HepG2 (cell line): ENCODE measurements at regions of chr6 and their contacts with region 1.

Region 1: DNA sequence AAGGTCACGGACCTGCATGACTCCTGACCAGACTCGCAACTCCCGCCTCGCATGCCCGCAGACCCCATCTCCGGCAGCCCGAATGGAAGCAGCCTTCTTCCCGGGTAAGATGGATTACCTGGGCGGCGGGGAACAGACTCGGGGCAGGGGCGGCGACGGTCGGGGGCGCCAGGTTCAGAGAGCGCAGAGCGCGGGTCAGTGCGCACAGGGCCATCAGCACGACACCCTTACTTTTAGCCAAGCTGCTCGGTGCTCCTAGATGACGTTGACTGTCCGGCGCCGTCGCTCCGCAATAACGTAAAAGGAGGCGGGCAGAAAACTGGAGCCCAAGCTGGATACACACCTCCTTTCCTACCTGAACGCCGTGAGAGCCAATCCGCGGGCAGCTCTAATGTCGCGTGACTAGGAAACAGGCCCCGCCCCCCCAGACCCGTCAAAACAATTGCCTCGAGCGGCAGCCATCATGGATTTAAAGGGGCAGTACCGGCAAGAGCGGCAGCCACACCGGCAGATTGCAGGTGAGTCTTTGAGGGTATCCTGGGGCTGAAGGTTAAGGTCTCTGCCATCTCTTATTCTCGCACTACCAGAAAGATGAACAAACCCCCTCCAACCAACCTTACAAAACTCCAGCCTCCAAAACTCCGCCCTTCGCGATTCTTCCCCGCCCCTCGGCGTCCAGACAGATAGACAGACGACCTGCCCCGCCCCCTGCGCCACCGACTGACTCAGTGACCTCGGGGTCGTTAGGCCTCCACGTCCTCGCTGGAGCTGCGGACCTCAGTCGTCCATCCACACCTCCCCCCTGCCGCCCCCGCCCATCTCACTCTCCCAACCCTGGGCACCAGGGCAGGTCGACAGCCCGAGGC is at the starts of genes KLC4 and MRPL2:
- DNase-seq: peak; percentile 99
- ATAC-seq: peak; percentile 82
- H3K4me3 ChIP-seq: peak within 1 kb of the TSS; percentile 74 to 99 (median 93)
- H3K27ac ChIP-seq: peak within 1 kb of the TSS; percentile 91
- H3K4me1 ChIP-seq: peaks cover 37% of the 10 kb centered on the region
- H3K27me3 ChIP-seq: no peaks in the 10 kb centered on the region; a peak in 1 of 5 replicates
- CTCF ChIP-seq: peak; percentile 11; the same call in 1 of the 2 replicates
- EP300 ChIP-seq: peak in 1 of 2 experiments; percentile 18; a peak in 1 of 4 replicates
- POLR2A ChIP-seq: peak in 1 of 2 experiments; percentile 93; a peak in 2 of 4 replicates
- RAD21 ChIP-seq: 0 out of 2 replicates have a peak, but pooled peaks have one; percentile 13
- total RNA-seq, gene KLC4: 45.4 and 45.8 TPM in 2 replicates
- total RNA-seq, gene MRPL2: 56.1 and 56.8 TPM in 2 replicates

Region 2: DNA sequence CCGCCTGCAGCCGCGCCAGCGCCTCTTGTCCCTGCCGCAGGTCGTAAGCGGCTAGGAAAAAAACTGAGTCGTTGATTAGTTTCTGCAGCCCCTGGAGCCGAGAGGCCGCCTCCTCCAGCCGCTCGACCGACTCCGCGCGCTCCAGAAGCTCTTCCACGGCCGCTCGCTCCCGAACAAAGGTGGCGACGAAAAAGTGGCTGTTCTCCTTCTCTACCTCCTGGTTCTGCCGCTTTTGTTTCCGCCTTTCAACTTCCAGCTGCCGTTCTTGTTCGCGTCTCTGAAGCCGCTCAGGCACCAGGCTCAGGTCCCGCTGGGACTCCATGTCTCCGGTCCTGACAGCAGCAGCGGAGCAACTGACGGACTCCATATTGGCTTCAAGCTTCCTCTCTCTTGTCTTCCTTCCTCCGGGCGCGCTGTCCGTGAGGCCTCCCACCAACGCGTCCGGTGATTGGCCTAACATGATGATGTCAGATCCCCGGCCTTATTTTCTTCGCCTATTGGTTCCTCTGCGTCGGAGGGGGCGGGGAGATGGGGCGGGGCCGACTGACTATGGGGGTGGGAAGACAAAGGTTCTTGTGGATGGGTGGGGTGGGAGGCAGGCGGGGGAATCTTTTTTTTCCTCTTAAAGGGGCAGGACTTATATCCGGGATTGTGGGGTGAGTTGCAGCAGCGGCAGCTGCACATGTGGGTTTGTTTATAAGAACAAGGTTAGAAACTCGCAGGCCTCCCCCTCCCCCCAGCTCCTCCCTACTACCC is 313.5 kb before region 1 on chr6 and contains the start of gene TBCC:
- CTCF ChIA-PET with region 1: no interaction called
- POLR2A ChIA-PET with region 1: interaction called, 13 read pairs
- in situ Hi-C with region 1: no loop called
- intact Hi-C with region 1: no loop called
- DNase-seq: peak; percentile 99
- ATAC-seq: peak; percentile 87
- H3K4me3 ChIP-seq: peak within 1 kb of the TSS; percentile 93 to 100 (median 99)
- H3K27ac ChIP-seq: peak within 1 kb of the TSS; percentile 93
- H3K4me1 ChIP-seq: peaks cover 44% of the 10 kb centered on the region
- H3K27me3 ChIP-seq: no peaks in the 10 kb centered on the region; a peak in 1 of 5 replicates
- CTCF ChIP-seq: no peak; the same call in 1 of the 2 replicates
- EP300 ChIP-seq: 0 out of 4 replicates have a peak, but pooled peaks of 1 of the 2 experiments have one; percentile 15
- POLR2A ChIP-seq: peak; percentile 97 to 100
- RAD21 ChIP-seq: 0 out of 2 replicates have a peak, but pooled peaks have one; percentile 4
- total RNA-seq, gene TBCC: 36.1 and 43.2 TPM in 2 replicates

Region 3: DNA sequence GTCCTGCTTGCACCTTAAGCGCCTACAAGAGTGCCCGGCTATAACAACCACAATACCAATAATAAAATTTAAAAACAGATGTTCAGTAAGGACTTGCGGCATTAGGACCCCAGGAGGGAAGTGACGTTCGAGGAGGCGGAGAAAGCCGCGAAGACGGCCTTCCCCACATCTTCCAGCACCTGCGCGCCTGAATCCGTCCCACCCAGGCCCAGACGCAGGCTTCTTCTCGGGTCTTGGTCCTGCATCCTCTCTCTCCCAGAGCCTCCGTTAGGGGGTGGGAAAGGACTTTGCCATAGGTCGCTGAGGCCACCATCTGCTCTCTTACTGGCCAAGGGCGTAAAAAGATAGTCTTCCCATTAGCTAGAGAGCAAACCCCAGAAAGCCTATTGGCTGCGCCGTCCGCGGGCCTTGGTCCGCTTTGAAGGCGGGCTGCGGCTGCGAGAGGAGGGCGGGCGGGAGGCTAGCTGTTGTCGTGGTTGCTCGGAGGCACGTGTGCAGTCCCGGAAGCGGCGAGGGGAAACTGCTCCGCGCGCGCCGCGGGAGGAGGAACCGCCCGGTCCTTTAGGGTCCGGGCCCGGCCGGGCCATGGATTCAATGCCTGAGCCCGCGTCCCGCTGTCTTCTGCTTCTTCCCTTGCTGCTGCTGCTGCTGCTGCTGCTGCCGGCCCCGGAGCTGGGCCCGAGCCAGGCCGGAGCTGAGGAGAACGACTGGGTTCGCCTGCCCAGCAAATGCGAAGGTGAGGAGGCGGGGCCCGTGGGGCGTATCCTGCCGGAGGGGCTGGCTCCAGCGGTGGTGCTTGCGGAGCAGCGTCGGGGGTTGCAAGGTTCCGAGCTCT is 130.2 kb before region 1 on chr6 and contains the start of gene CNPY3:
- CTCF ChIA-PET with region 1: no interaction called
- POLR2A ChIA-PET with region 1: interaction called, 21 read pairs
- in situ Hi-C with region 1: no loop called
- intact Hi-C with region 1: no loop called
- DNase-seq: peak; percentile 97
- ATAC-seq: peak; percentile 94
- H3K4me3 ChIP-seq: peak within 1 kb of the TSS; percentile 71 to 79 (median 78)
- H3K27ac ChIP-seq: peak within 1 kb of the TSS; percentile 83
- H3K4me1 ChIP-seq: peaks cover 64% of the 10 kb centered on the region
- H3K27me3 ChIP-seq: no peaks in the 10 kb centered on the region; a peak in 1 of 5 replicates
- CTCF ChIP-seq: peak; percentile 46
- EP300 ChIP-seq: peak in 1 of 2 experiments; percentile 8; a peak in 1 of 4 replicates
- POLR2A ChIP-seq: peak; percentile 70 to 74
- RAD21 ChIP-seq: peak; percentile 44
- total RNA-seq, gene CNPY3: 31.4 and 60.2 TPM in 2 replicates

Region 4: DNA sequence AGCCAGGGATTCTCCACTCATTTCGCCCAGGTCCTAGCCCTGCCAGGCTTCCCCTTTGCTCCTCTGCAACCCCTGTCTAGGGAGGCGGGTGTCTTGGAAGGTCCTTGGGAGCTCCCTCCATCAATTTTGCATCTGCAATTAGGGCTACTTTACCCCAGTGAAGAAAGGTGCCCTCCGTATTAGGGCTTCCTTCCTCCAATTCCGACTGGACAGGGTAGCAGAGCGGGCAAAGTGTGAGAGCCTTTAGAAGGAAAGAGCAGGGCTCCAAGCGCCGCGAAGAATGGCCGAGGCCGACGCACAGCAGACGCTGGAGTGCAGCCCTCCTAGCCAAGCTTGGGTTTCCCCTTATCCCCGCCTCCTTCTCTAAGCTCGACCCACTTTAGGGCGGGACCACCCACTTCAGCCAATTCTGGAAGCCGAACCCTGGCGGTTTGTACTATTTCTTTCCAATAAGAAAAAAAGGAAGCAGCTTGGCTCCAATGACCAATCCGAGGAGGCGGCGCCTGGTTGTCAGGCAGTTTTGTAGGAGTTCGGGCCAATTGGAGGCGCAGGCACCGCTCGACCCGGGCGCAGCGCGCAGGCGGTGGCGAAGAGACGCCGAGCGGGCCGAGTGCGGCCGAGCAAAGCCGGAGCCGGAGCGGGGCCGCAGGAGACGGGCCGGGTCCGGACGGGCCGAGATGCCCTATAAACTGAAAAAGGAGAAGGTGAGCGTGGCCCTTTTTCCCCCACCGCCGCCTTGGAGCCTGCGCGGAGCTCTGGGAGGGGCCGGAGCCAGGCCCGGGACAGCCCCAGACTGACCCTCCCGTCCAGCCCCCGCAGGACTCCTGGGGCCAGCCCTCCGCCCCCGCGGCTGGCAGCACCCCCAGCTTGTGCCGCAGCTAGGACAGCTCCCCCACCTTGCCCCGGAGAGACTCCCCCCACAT is 75.1 kb before region 1 on chr6 and contains the start of gene PPP2R5D:
- CTCF ChIA-PET with region 1: no interaction called
- POLR2A ChIA-PET with region 1: interaction called, 44 read pairs
- in situ Hi-C with region 1: no loop called
- intact Hi-C with region 1: no loop called
- DNase-seq: peak; percentile 100
- ATAC-seq: peak; percentile 95
- H3K4me3 ChIP-seq: peak within 1 kb of the TSS; percentile 88 to 99 (median 92)
- H3K27ac ChIP-seq: peak within 1 kb of the TSS; percentile 75
- H3K4me1 ChIP-seq: peaks cover 52% of the 10 kb centered on the region
- H3K27me3 ChIP-seq: no peaks in the 10 kb centered on the region; a peak in 1 of 5 replicates
- CTCF ChIP-seq: no peak
- EP300 ChIP-seq: no peak
- POLR2A ChIP-seq: peak; percentile 93 to 99
- RAD21 ChIP-seq: peak; percentile 29; the same call in 1 of the 2 replicates
- total RNA-seq, gene PPP2R5D: 55.6 and 60.4 TPM in 2 replicates

Region 5: DNA sequence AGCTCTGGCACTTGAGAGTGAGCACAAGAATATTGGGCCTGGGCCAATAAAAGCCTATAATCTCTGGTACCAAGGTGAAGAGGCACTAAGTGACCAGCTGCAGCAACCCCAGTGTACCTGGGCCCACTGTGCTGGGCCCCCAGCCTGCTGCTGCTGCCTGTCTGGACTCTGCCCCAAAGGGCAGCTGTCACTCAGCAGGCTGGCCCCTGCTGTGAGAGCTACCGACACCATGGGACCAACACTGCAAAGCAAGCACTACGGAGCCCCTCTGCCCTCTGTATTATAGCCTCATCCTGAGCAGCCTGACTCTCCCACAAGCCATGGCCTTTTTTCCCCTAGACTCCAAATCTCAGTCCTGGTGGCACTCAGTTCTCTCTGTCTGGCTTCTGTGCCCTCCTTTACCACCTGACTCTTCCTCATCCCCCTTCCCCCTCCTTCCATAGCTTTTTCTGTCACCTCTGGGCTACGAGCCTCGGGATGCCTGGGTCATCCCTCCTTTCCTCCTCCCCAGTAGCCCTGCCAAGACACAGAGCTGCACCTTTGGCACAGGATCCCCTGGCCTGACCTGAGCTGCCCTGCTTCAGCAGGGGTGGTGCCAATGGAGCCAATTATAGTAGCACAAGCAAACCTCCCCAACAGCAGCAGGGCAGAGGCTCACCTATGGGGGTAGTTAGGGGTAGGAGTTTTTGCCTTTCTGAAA is 23.8 kb before region 1 on chr6:
- CTCF ChIA-PET with region 1: no interaction called
- POLR2A ChIA-PET with region 1: interaction called, 19 read pairs
- in situ Hi-C with region 1: no loop called
- intact Hi-C with region 1: no loop called
- DNase-seq: no peak
- ATAC-seq: peak; percentile 86
- H3K4me3 ChIP-seq: peak overlapping the region in 1 of 3 experiments; percentile 3; a peak in 1 of 6 replicates
- H3K27ac ChIP-seq: peak overlapping the region; percentile 39
- H3K4me1 ChIP-seq: peaks cover 12% of the 10 kb centered on the region
- H3K27me3 ChIP-seq: no peaks in the 10 kb centered on the region
- CTCF ChIP-seq: no peak
- EP300 ChIP-seq: no peak
- POLR2A ChIP-seq: peak in 1 of 2 experiments; percentile 16; a peak in 1 of 4 replicates
- RAD21 ChIP-seq: no peak

Region 6: DNA sequence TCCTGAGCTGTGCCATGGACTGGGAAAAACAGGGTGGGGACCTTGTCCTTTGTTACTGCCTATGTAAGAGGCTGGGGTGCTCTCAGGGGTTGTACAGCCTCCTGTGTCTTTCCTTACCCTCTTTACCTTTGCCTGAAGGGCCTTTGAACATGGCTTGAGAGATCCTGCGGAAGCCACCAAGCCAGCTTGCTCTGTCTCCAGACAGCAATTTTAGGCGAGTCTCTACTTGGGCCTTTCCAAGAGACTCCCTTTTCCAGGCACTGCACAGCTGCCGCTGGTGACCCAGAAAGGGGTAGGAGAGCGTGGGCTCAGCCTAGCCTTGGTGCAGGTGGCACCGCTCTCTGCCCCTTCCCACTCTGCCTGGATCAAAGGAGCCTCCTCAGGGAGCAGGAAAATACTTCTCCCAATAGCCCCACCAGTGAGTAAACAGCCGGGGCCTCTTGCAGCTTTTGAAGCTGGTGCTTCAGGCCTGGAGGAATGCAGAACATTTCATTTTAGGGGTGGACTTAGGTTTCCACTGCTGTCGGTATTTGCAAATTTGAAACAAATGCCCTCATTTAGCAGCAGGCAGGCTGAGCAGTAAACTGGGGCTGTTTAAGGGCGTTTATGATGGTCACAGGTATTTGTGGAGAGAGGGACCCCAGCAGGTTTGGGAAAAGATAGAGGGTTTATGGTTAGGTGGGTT is 30.6 kb after region 1 on chr6:
- CTCF ChIA-PET with region 1: no interaction called
- POLR2A ChIA-PET with region 1: interaction called, 51 read pairs
- in situ Hi-C with region 1: no loop called
- intact Hi-C with region 1: no loop called
- DNase-seq: peak; percentile 95
- ATAC-seq: peak; percentile 84
- H3K4me3 ChIP-seq: peak overlapping the region; percentile 57 to 74 (median 57)
- H3K27ac ChIP-seq: peak overlapping the region; percentile 92
- H3K4me1 ChIP-seq: peaks cover 85% of the 10 kb centered on the region
- H3K27me3 ChIP-seq: no peaks in the 10 kb centered on the region
- CTCF ChIP-seq: no peak
- EP300 ChIP-seq: peak; percentile 88 to 96; a peak in 3 of 4 replicates
- POLR2A ChIP-seq: peak in 1 of 2 experiments; percentile 73; a peak in 2 of 4 replicates
- RAD21 ChIP-seq: no peak; the same call in 1 of the 2 replicates

Region 7: DNA sequence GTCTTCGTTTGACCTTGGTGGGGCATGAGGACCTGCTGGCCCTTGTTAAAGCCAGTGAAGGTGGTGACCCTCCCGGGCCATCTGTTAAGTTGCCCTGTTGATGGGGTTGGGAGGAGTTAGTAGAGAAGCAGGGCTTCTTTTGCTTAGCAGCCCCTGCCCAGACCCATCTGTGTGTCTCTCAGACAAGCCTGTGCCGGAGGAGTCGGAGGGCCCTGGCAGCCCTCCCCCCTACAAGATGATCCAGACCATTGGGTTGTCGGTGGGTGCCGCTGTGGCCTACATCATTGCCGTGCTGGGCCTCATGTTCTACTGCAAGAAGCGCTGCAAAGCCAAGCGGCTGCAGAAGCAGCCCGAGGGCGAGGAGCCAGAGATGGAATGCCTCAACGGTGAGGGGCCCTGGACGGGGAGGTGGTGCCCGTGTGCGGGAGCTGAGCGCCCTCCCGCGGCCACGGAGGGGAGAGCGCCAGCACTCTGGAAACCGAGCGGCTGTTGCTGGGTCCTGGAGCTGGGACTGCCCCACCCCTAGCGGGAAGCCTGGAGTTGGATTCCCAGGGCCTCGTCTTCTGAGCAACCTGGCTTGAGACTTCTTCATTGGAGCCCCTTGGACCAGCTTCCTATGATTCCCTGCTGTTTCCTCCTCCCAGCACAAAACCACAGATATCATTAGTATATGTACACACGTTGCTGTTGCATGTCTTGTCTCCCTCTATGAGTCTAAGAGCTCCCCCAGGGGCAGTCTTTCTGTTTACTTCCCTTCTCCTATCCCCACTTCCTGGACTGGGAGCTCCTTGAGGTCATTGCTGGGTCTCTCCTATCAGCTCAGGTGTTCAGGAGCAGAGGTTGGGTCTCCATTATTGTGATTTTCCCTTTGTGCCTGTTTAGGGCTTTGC is 84.1 kb after region 1 on chr6:
- CTCF ChIA-PET with region 1: interaction called, 5 read pairs
- POLR2A ChIA-PET with region 1: interaction called, 30 read pairs
- in situ Hi-C with region 1: no loop called
- intact Hi-C with region 1: no loop called
- DNase-seq: peak; percentile 76
- ATAC-seq: peak; percentile 95
- H3K4me3 ChIP-seq: no peak overlapping the region; a peak in 1 of 6 replicates
- H3K27ac ChIP-seq: no peak overlapping the region
- H3K4me1 ChIP-seq: peaks cover 21% of the 10 kb centered on the region
- H3K27me3 ChIP-seq: no peaks in the 10 kb centered on the region
- CTCF ChIP-seq: peak; percentile 100
- EP300 ChIP-seq: 0 out of 4 replicates have a peak, but pooled peaks of 1 of the 2 experiments have one; percentile 13
- POLR2A ChIP-seq: no peak
- RAD21 ChIP-seq: peak; percentile 100

Region 8: GRCh38 chr6:43645613-43645964 is 586.2 kb after region 1 on chr6:
- CTCF ChIA-PET with region 1: no interaction called
- POLR2A ChIA-PET with region 1: no interaction called
- in situ Hi-C with region 1: no loop called
- intact Hi-C with region 1: no loop called
- DNase-seq: no peak
- ATAC-seq: no peak
- H3K4me3 ChIP-seq: no peak overlapping the region
- H3K27ac ChIP-seq: no peak overlapping the region
- H3K4me1 ChIP-seq: no peaks in the 10 kb centered on the region
- H3K27me3 ChIP-seq: peaks cover 0 to 7% of the 10 kb centered on the region in 2 experiments; a peak in 1 of 5 replicates
- CTCF ChIP-seq: no peak
- EP300 ChIP-seq: no peak
- POLR2A ChIP-seq: no peak
- RAD21 ChIP-seq: no peak